ENCODE measurements at regions of chr5 and their contacts with region 1.

Region 1: DNA sequence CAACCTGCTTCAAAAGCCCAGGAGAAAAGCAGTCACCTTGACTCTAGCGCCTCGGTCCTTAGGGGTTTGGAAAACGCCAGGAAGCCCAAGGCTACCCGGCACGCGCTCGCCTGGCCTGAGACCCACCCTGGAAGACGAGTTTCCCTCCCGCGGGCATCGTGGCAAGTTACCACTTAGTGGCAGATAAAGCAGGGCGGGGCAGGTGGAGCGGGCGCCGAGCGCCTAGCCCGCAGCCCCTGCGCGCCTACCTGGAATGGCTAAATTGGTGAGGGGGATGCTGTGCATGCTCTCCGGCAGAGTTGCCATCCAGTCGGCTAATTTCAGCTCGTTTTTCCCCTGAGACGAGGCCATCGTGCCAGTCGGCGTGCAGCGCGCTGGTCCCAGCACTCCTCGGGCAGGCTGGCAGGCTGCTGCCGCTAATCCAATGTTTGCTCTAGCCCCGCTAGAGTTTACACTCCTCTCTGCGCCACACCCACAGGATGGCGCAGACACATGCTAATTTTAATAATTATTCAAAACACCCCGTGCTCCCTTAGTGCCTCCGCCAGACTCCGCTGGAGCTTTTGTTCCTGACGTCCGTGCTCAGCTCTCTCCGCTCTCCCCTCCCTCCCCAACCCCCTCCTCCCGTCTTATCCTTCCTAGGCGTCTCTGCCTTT is at the start of gene PLCXD3:
- DNase-seq: peak; percentile 44 to 73 (median 63)
- ATAC-seq: peak; percentile 92 to 94 (median 94)
- H3K4me3 ChIP-seq: peak within 1 kb of the TSS; percentile 41 to 84 (median 71)
- H3K27ac ChIP-seq: peak within 1 kb of the TSS; percentile 25 to 87 (median 82)
- H3K4me1 ChIP-seq: peaks cover 0 to 25% (median 8%) of the 10 kb centered on the region in 12 donors
- H3K27me3 ChIP-seq: peaks cover 0 to 13% (median 0%) of the 10 kb centered on the region in 9 donors
- CTCF ChIP-seq: no peak
- POLR2A ChIP-seq: peak; percentile 31 to 97
- total RNA-seq, gene PLCXD3: 48.2 to 107 (median 71.6) TPM

Region 2: GRCh38 chr5:41182666-41183065 is 327.6 kb before region 1 on chr5:
- intact Hi-C with region 1: loop called in 1 of 10 experiments (anchors 10 kb)
- DNase-seq: no peak
- ATAC-seq: no peak
- H3K4me3 ChIP-seq: no peak overlapping the region
- H3K27ac ChIP-seq: peak overlapping the region in 3 of 12 donors; percentile 25 to 33 (median 32)
- H3K4me1 ChIP-seq: peaks cover 0 to 27% (median 10%) of the 10 kb centered on the region in 12 donors
- H3K27me3 ChIP-seq: no peaks in the 10 kb centered on the region
- CTCF ChIP-seq: no peak
- POLR2A ChIP-seq: no peak

Region 3: DNA sequence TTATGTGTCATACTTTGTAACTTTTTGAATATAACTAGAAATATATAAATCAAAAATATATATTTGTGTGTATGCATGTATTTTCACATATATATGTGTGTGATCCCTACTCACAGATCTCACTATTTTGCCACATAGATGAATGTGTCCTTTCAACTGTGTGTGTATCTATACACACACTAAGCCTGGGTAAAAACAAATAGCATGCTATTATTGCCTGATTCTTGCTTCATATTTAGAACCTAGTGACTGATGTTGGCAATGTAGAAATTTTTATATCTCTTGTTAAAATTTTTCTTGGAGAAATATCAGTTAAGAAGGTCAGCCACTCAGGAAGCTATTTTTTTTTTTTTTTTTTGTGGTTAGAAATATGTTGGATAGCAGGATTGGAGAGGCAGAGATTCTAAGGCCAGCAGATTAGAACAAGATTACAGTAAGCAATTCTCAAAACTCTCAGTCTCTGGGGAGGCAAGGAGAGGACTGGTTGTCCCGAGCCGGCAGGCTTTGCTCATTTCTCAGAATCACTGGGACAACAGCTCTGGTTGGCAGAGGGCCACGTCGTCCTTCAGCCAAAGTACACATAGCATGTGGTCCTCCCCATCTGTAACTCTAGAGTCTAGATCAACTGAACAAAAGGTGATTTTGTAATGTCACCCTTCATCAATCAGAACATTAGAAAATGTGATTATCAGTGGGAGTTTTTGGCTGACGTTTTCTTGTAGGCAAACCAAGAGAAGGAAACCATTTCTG is 316.7 kb before region 1 on chr5:
- intact Hi-C with region 1: loop called in 2 of 10 experiments (anchors 5 to 10 kb)
- DNase-seq: peak; percentile 94 to 99 (median 97)
- ATAC-seq: peak; percentile 96 to 98 (median 97)
- H3K4me3 ChIP-seq: no peak overlapping the region
- H3K27ac ChIP-seq: peak overlapping the region; percentile 58 to 85 (median 78)
- H3K4me1 ChIP-seq: peaks cover 0 to 30% (median 16%) of the 10 kb centered on the region in 12 donors
- H3K27me3 ChIP-seq: no peaks in the 10 kb centered on the region
- CTCF ChIP-seq: no peak
- POLR2A ChIP-seq: no peak

Region 4: GRCh38 chr5:41275813-41276512 is 234.3 kb before region 1 on chr5:
- intact Hi-C with region 1: loop called in 4 of 10 experiments (anchors 5 kb)
- DNase-seq: no peak
- ATAC-seq: no peak
- H3K4me3 ChIP-seq: no peak overlapping the region
- H3K27ac ChIP-seq: no peak overlapping the region
- H3K4me1 ChIP-seq: peaks cover 0 to 5% (median under 1%) of the 10 kb centered on the region in 12 donors
- H3K27me3 ChIP-seq: no peaks in the 10 kb centered on the region
- CTCF ChIP-seq: no peak
- POLR2A ChIP-seq: no peak

Region 5: DNA sequence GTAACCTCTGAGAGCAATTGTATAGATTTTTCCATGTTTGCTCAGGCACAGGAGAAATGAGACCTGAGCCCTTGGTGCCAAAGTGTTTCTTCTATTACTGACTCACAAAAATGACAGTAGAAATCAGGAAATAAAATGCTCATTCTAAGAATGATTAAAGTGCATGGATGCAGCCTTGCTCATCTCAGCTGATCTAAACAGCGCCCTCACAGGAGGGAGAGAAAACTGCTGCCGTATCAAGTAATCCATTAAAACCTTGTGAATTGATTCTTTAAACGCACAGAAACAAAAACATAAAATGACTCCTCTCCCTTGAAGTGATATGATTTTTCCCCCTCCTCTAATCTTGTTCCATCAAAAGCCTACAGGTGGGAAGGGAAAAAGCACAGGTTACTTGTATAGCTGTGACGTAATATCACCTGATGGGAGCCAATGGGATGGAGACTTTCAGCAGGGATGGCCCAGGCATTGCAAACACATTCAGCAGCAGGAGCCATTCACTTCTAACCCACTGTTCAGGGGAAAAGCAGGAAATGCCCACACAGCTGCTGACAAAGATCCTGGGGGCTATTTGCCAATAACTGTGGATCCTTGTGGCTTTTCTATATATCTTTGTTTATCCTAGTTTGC is 76.6 kb before region 1 on chr5:
- intact Hi-C with region 1: no loop called
- DNase-seq: no peak
- ATAC-seq: no peak
- H3K4me3 ChIP-seq: no peak overlapping the region
- H3K27ac ChIP-seq: no peak overlapping the region
- H3K4me1 ChIP-seq: peaks cover 0 to 36% (median 3%) of the 10 kb centered on the region in 12 donors
- H3K27me3 ChIP-seq: no peaks in the 10 kb centered on the region
- CTCF ChIP-seq: peak in 6 of 12 donors; percentile 8 to 38 (median 30)
- POLR2A ChIP-seq: no peak

Region 6: GRCh38 chr5:41457094-41457493 is 53.2 kb before region 1 on chr5:
- intact Hi-C with region 1: loop called in 1 of 10 experiments (anchors 10 kb)
- DNase-seq: peak in 4 of 5 donors; percentile 30 to 76 (median 55)
- ATAC-seq: peak; percentile 87 to 93 (median 93)
- H3K4me3 ChIP-seq: no peak overlapping the region
- H3K27ac ChIP-seq: peak overlapping the region; percentile 23 to 84 (median 68)
- H3K4me1 ChIP-seq: peaks cover 0 to 46% (median 13%) of the 10 kb centered on the region in 12 donors
- H3K27me3 ChIP-seq: no peaks in the 10 kb centered on the region
- CTCF ChIP-seq: no peak
- POLR2A ChIP-seq: no peak

Measured in heart left ventricle (tissue), 16 donors.